Esophagus muscularis mucosa (tissue), 4 donors: ENCODE measurements at regions of chr12 and their contacts with region 1.

Region 1: GRCh38 chr12:25332143-25332542 is 81.4 kb upstream of the KRAS start:
- DNase-seq: no peak
- H3K4me3 ChIP-seq: no peak overlapping the region
- H3K27ac ChIP-seq: no peak overlapping the region
- H3K4me1 ChIP-seq: peaks cover 0 to 26% (median 15%) of the 10 kb centered on the region in 4 donors
- H3K27me3 ChIP-seq: no peaks in the 10 kb centered on the region
- CTCF ChIP-seq: no peak
- EP300 ChIP-seq: no peak
- POLR2A ChIP-seq: no peak

Region 2: GRCh38 chr12:25184132-25184531 is 148.0 kb before region 1 on chr12:
- intact Hi-C with region 1: no loop called
- DNase-seq: no peak
- H3K4me3 ChIP-seq: no peak overlapping the region
- H3K27ac ChIP-seq: no peak overlapping the region
- H3K4me1 ChIP-seq: peaks cover 0 to 10% (median 0%) of the 10 kb centered on the region in 4 donors
- H3K27me3 ChIP-seq: no peaks in the 10 kb centered on the region
- CTCF ChIP-seq: no peak
- EP300 ChIP-seq: no peak
- POLR2A ChIP-seq: no peak

Region 3: DNA sequence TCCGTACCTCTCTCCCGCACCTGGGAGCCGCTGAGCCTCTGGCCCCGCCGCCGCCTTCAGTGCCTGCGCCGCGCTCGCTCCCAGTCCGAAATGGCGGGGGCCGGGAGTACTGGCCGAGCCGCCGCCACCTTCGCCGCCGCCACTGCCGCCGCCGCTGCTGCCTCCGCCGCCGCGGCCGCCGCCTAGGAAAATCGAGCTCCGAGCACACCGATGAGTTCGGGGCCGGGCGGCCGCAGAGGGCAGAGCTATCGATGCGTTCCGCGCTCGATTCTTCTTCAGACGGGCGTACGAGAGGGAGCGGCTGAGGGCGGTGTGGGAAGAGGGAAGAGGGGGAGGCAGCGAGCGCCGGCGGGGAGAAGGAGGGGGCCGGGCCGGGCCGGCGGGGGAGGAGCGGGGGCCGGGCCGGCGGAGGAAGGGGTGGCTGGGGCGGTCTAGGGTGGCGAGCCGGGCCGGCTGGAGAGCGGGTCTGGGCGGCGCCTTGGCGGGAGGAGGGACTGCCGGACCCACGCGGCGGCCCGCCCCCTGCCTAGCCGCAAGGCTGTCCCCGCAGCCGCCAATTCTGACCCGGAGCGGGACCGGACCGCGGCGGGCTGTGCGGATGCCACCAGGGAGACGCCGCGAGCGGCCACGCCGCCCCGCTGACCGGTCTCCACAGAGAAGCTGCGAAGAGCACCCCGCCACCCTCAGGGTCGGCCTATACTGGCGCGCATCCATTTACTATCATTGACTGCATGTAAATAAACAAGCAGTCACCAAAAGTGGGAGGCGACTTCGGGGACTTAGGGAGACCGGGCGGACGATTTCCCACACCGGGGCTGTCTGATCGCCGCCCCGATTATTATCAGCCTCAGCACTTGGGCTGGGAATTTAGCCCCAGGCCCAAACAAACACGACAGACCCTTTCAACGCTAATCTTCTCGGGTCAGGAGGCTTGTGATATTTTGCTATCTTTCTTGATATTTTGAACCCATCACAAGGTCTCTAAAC is 81.1 kb before region 1 on chr12 and contains the start of gene KRAS:
- intact Hi-C with region 1: loop called (anchors 5 kb)
- DNase-seq: peak; percentile 98
- H3K4me3 ChIP-seq: peak within 1 kb of the TSS; percentile 80 to 100 (median 98)
- H3K27ac ChIP-seq: peak within 1 kb of the TSS; percentile 96 to 99 (median 99)
- H3K4me1 ChIP-seq: peaks cover 12 to 40% (median 31%) of the 10 kb centered on the region in 4 donors
- H3K27me3 ChIP-seq: no peaks in the 10 kb centered on the region
- CTCF ChIP-seq: peak in 1 of 3 experiments; percentile 3
- EP300 ChIP-seq: no peak
- POLR2A ChIP-seq: peak; percentile 78
- total RNA-seq, gene KRAS: 29.0 to 37.0 (median 34.1) TPM